IMR-90 (cell line): ENCODE measurements at regions of chr5 and their contacts with region 1.

Region 1: DNA sequence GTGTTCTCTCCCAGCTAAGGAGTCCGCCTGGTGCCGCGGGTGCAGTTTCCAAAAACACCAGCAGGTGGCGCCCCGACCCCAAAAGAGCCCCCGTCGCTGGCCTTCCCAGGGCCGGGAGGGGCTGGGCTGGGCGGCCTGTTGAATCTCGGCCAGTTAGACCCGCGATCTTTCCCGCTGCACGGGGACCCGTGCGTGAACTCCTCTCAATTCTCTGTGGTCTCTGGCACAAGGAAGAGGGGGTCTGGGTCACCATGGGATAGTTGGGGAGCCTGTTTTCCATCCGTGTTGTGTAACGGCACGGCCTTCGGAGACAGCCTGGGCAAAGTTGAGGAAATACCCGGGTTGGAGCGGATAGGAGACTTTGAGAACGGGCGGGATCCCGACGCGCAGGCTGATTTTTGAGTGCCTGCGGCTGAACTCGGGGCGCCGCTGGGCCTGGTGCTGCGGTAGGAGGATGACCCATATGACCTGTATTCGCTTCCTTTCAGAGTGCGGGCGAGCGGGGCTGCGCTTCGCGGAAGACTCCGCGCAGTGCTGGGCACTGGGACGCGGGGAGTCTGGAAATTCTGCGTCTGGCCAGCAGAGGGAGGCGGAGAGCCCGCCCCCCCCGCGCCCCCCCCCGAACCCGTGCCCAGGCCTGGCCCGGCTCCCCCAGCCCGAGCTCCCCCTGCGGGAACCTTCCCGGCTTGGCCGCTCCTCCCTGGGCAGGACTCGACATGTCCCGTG is 7.9 kb upstream of the PSD2 start:
- DNase-seq: peak; percentile 52
- ATAC-seq: peak; percentile 94
- H3K4me3 ChIP-seq: peak overlapping the region; percentile 57
- H3K27ac ChIP-seq: no peak overlapping the region
- H3K4me1 ChIP-seq: no peaks in the 10 kb centered on the region
- H3K27me3 ChIP-seq: peaks cover 33% of the 10 kb centered on the region
- CTCF ChIP-seq: peak; percentile 99
- POLR2A ChIP-seq: no peak
- RAD21 ChIP-seq: peak; percentile 94

Region 2: DNA sequence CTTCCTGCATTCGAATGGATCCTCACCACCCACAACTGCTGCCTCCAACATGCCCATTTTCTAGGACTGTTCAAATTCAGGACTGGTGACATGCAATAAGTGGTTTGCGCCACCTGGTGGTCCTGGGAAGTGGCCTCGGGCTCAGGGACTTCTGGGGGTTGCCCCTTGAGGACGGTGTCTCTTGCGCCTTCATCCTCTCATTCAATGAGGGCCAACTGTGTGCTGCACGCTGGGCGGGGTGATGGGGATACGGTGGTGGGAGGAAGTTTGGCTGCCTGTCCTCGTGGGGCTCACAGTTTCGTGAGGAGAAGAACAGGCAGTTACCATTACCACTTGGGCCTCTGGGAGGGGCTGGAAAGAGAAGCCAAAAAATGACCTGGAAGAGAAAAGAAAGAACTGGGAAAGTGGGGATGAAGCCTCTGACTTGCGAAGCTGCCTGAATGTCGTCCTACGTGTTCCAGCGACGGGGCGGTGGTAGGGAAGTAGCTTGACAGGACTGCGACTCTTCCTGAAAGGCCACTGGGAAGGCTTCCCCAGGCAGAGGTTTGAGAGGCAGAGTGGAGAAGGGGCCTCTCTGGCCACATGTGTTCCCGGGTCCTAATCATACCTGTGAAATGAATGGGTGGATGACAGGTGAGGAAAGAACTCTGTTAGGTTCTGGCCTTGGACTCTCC is 56.9 kb after region 1 on chr5:
- CTCF ChIA-PET with region 1: interaction called, 7 read pairs
- POLR2A ChIA-PET with region 1: no interaction called
- dilution Hi-C with region 1: no loop called
- in situ Hi-C with region 1: loop called (anchors 5 kb)
- intact Hi-C with region 1: loop called (anchors 1 kb)
- DNase-seq: peak; percentile 64
- ATAC-seq: peak; percentile 84
- H3K4me3 ChIP-seq: no peak overlapping the region
- H3K27ac ChIP-seq: no peak overlapping the region
- H3K4me1 ChIP-seq: no peaks in the 10 kb centered on the region
- H3K27me3 ChIP-seq: peaks cover 53% of the 10 kb centered on the region
- CTCF ChIP-seq: peak; percentile 69
- POLR2A ChIP-seq: no peak
- RAD21 ChIP-seq: peak; percentile 66

Region 3: DNA sequence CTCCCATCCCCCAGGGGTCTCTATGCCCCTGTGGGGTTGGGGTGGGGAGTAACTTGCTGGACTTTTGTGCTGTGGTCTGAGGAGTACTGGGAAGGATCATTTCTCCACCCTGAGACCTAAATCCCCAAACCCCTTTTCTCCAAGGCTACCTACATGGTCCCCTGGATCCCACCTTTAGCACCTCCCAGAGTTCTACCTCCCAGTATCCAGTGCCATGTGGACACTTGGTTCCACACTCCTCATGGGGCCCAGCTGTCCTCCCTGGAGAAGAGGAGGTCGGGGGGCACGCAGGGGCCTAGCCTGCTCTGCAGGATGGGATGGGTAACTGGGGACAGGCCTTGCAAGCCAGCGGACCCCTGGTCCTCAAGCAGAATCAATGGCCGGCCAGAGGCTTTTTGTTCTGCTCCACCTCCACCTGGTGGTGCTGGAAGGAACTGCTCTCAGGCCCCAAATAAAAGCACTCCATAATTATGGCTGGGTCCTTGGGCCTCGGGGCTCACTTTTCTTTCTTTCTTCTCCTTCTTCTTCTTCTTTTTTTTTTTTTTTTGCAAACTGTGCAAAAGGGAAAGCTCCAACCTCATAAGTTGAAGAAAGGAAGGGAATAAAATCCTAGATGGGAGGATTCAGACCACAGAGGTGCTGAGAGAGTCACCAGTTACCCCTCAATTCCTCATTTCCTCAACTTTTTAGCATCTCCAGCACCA is 76.3 kb after region 1 on chr5:
- CTCF ChIA-PET with region 1: interaction called, 11 read pairs
- POLR2A ChIA-PET with region 1: no interaction called
- dilution Hi-C with region 1: no loop called
- in situ Hi-C with region 1: no loop called
- intact Hi-C with region 1: loop called (anchors 1 kb)
- DNase-seq: peak; percentile 41
- ATAC-seq: peak; percentile 94
- H3K4me3 ChIP-seq: no peak overlapping the region
- H3K27ac ChIP-seq: no peak overlapping the region
- H3K4me1 ChIP-seq: no peaks in the 10 kb centered on the region
- H3K27me3 ChIP-seq: peaks cover 68% of the 10 kb centered on the region
- CTCF ChIP-seq: peak; percentile 79
- POLR2A ChIP-seq: no peak
- RAD21 ChIP-seq: peak; percentile 65

Region 4: DNA sequence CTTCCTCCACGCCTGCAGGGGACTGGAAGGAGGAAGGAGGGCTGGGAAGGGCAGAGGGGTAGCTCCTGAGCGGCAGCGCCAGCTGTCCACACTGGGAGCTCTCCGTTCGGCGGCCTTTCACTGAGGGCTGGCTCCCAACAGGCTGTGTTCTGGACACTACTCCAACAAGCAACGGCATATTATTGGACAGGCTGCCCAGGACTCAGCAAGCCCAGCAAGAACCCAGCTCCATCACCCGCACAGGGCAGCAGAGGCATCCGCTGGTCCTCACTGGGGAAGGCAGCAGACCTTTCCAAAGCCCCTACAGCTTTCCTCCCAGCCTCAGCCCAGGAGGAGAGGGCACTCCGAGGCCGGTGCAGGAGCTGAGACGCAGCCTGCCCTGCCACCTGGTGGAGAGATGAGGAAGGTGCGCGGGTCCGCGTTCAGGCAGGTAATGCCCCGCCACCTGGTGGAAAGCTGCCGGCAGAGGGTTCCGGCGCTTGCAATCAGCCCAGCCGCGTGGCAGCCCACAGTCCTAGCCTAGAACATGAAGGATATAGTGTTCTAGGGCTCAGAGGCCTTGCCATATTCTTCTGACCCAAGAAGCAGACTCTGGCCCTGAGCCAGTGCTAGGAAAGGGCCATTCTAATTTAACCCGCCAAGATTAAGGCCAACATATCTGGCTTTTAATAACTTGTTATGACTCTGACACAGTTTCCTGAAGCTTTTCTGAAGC is 181.0 kb after region 1 on chr5:
- CTCF ChIA-PET with region 1: interaction called, 28 read pairs
- POLR2A ChIA-PET with region 1: no interaction called
- dilution Hi-C with region 1: no loop called
- in situ Hi-C with region 1: loop called (anchors 5 kb)
- intact Hi-C with region 1: loop called (anchors 1 kb)
- DNase-seq: peak; percentile 52
- ATAC-seq: peak; percentile 99
- H3K4me3 ChIP-seq: no peak overlapping the region
- H3K27ac ChIP-seq: no peak overlapping the region
- H3K4me1 ChIP-seq: no peaks in the 10 kb centered on the region
- H3K27me3 ChIP-seq: peaks cover 39% of the 10 kb centered on the region
- CTCF ChIP-seq: peak; percentile 99
- POLR2A ChIP-seq: no peak
- RAD21 ChIP-seq: peak; percentile 81

Region 5: GRCh38 chr5:140157032-140157803 is 369.5 kb after region 1 on chr5:
- CTCF ChIA-PET with region 1: no interaction called
- POLR2A ChIA-PET with region 1: no interaction called
- dilution Hi-C with region 1: no loop called
- in situ Hi-C with region 1: loop called (anchors 10 kb)
- intact Hi-C with region 1: loop called (anchors 1 kb)
- DNase-seq: peak; percentile 73
- ATAC-seq: peak; percentile 98
- H3K4me3 ChIP-seq: peak overlapping the region; percentile 5; the same call in 1 of the 2 replicates
- H3K27ac ChIP-seq: no peak overlapping the region
- H3K4me1 ChIP-seq: no peaks in the 10 kb centered on the region
- H3K27me3 ChIP-seq: no peaks in the 10 kb centered on the region; the same call in 1 of the 2 replicates
- CTCF ChIP-seq: peak; percentile 97
- POLR2A ChIP-seq: no peak
- RAD21 ChIP-seq: peak; percentile 96

Region 6: GRCh38 chr5:140169410-140169809 is 381.7 kb after region 1 on chr5:
- CTCF ChIA-PET with region 1: no interaction called
- POLR2A ChIA-PET with region 1: no interaction called
- dilution Hi-C with region 1: no loop called
- in situ Hi-C with region 1: loop called (anchors 10 kb)
- intact Hi-C with region 1: no loop called
- DNase-seq: no peak
- ATAC-seq: no peak
- H3K4me3 ChIP-seq: no peak overlapping the region
- H3K27ac ChIP-seq: no peak overlapping the region
- H3K4me1 ChIP-seq: no peaks in the 10 kb centered on the region
- H3K27me3 ChIP-seq: no peaks in the 10 kb centered on the region
- CTCF ChIP-seq: no peak
- POLR2A ChIP-seq: no peak
- RAD21 ChIP-seq: no peak

Region 7: DNA sequence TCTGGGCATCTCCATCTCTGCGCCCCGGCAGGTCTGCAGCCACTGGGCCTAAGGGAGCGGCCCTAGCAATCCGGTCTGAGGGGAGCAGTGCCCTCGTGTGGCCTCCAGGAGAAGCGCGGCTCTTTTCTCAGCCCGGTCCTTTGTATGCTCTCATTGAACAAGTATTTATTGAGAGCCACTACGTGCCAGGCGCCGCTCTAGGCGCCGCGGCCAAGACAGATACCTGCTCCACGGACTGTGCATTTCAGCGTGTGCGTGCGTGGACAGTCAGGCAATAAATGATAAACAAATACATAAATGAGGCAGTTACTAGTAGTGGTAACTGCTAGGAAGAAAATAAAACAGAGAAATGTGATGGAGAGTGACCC is 570.0 kb after region 1 on chr5:
- CTCF ChIA-PET with region 1: no interaction called
- POLR2A ChIA-PET with region 1: no interaction called
- dilution Hi-C with region 1: no loop called
- in situ Hi-C with region 1: loop called (anchors 25 kb)
- intact Hi-C with region 1: no loop called
- DNase-seq: peak; percentile 83
- ATAC-seq: peak; percentile 99
- H3K4me3 ChIP-seq: peak overlapping the region; percentile 5; the same call in 1 of the 2 replicates
- H3K27ac ChIP-seq: no peak overlapping the region
- H3K4me1 ChIP-seq: no peaks in the 10 kb centered on the region
- H3K27me3 ChIP-seq: no peaks in the 10 kb centered on the region; the same call in 1 of the 2 replicates
- CTCF ChIP-seq: peak; percentile 96
- POLR2A ChIP-seq: no peak
- RAD21 ChIP-seq: peak; percentile 87